Posterior vena cava (tissue), 2 donors: ENCODE measurements at regions of chr3 and their contacts with region 1.

Region 1: GRCh38 chr3:184836090-184836822 is 24.3 kb downstream of the VPS8 start:
- DNase-seq: no peak

Region 2: GRCh38 chr3:184850201-184850600 is 13.9 kb after region 1 on chr3:
- intact Hi-C with region 1: no loop called
- DNase-seq: no peak

Region 3: GRCh38 chr3:184981071-184981470 is 144.8 kb after region 1 on chr3:
- intact Hi-C with region 1: no loop called
- DNase-seq: no peak

Region 4: DNA sequence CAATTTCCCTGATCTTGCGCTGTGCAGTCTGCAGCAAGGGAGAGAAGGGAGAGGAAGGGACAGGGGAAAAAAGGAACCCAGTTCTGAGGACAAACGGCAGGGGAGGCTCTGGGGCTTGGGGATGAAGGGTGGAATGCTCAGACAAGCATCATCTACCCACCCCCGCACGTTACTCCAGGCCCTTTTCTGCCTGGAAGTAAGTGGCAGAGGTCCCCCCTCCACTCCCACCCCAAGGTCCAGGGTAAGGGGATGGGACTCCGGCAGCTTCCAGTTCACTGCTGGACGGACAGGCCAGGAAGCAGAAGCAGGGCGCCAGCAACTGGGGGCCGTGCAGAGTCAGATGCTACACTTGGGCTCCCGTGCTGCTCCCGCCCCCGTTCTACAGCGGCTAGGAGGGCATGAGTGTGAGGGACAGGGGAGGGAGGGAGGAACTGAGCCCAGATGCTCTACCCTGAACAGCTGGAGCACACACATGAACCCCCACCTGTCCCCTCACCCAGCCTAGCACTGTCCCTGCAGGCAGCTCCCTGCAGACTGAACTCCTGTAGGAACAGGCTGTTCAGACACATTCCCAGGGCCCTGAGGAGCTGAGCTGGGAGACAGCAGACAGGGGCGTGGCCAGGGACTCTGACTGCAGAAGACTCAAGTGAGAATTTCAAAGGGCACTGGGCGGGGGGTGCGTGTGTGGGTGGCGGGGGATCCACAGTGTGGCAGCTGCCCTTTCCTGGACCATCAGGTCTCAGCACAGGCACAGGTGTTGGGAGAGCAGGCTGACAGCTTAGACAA is 809.5 kb after region 1 on chr3:
- intact Hi-C with region 1: loop called in 1 of 2 experiments (anchors 5 kb)
- DNase-seq: no peak